Psoas muscle (tissue), 8 donors: ENCODE measurements at regions of chr19 and their contacts with region 1.

Region 1: DNA sequence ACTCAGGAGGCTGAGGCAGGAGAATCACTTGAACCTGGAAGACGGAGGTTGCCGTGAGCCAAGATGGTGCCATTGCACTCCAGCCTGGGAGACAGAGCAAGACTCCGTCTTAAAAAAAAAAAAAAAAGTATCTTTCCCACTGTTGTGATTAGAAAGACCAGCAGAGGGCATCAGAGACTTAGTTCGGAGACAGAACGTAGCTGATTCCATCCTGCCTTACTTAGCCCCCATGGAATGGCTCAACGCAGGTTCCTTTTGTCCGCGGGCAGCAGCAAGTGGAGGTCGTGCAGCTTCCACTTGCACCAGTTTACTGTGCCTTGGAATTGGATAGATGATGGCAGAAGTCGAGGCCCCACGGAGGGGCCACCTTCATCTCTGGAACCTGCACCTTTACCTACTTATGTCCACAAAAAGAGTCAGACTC is 8.1 kb downstream of the TIMM29 start:
- DNase-seq: no peak
- ATAC-seq: peak; percentile 78 to 88 (median 84)
- H3K4me3 ChIP-seq: no peak overlapping the region
- H3K27ac ChIP-seq: no peak overlapping the region
- H3K4me1 ChIP-seq: peaks cover 4% of the 10 kb centered on the region
- H3K27me3 ChIP-seq: no peaks in the 10 kb centered on the region
- CTCF ChIP-seq: peak; percentile 62

Region 2: GRCh38 chr19:11035441-11036377 is 99.0 kb after region 1 on chr19:
- intact Hi-C with region 1: loop called (anchors 5 kb)
- DNase-seq: peak; percentile 95 to 96
- ATAC-seq: peak; percentile 88 to 91 (median 90)
- H3K4me3 ChIP-seq: no peak overlapping the region
- H3K27ac ChIP-seq: peak overlapping the region; percentile 58
- H3K4me1 ChIP-seq: peaks cover 14% of the 10 kb centered on the region
- H3K27me3 ChIP-seq: no peaks in the 10 kb centered on the region
- CTCF ChIP-seq: peak; percentile 69

Region 3: GRCh38 chr19:11125994-11126685 is 189.5 kb after region 1 on chr19:
- intact Hi-C with region 1: loop called (anchors 5 to 10 kb)
- DNase-seq: peak; percentile 78 to 85
- ATAC-seq: peak; percentile 59 to 85 (median 68)
- H3K4me3 ChIP-seq: no peak overlapping the region
- H3K27ac ChIP-seq: no peak overlapping the region
- H3K4me1 ChIP-seq: no peaks in the 10 kb centered on the region
- H3K27me3 ChIP-seq: no peaks in the 10 kb centered on the region
- CTCF ChIP-seq: peak; percentile 67

Region 4: DNA sequence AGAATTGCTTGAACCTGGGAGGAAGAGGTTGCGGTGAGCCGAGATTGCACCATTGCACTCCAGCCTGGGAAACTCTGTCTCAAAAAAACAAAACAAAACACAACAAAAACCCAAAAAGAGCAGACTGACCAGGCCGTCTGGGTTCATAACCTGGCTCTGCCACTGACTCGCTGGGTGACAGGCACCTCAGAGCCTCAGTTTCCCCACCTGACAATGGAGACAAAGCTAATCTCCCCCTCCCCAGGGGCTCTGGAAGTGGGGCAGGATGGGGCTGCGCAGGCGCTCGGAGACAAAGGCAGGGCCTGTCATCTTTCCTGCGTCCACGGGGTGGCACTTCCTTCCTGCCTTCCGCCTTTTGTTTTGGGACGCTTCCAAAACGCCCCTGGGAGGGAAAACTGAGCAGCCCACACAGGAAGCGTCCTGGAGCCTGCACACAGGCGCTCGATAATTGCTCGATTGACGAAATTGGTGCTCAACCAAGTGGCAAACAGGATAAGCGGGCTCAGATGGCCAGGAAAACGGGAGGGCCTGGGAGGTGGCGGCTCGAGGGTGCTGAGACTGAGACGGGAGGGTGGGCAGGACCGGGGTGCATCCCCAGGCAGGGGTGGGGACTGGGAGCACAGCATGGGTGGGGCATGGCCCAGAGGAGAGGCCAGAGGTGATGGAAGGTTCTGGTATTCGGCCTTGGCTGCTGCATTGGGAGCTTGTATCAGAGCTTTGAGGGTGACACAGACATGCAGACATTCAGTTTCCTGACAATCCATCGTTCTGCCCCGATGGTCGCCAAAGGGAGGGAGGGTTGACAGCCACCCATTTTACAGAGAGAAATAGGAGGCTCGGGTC is 201.1 kb after region 1 on chr19:
- intact Hi-C with region 1: loop called (anchors 5 to 10 kb)
- DNase-seq: peak; percentile 83 to 89
- ATAC-seq: peak; percentile 56 to 72 (median 60)
- H3K4me3 ChIP-seq: peak overlapping the region; percentile 45
- H3K27ac ChIP-seq: peak overlapping the region; percentile 68
- H3K4me1 ChIP-seq: peaks cover 33% of the 10 kb centered on the region
- H3K27me3 ChIP-seq: no peaks in the 10 kb centered on the region
- CTCF ChIP-seq: peak; percentile 78